ENCODE measurements at regions of chr2 and their contacts with region 1.

Region 1: GRCh38 chr2:58448065-58448507 is 207.0 kb upstream of the FANCL start:
- DNase-seq: peak; percentile 14 to 84 (median 71)
- H3K4me3 ChIP-seq: peak overlapping the region in 3 of 59 donors; percentile 4 to 31 (median 12)
- H3K27ac ChIP-seq: peak overlapping the region in 50 of 59 donors; percentile 5 to 81 (median 67)
- H3K27me3 ChIP-seq: no peaks in the 10 kb centered on the region
- CTCF ChIP-seq: peak; percentile 40 to 97 (median 74)

Region 2: GRCh38 chr2:57720728-57721627 is 727.1 kb before region 1 on chr2:
- intact Hi-C with region 1: loop called in 1 of 2 experiments (anchors 5 kb)
- DNase-seq: peak in 8 of 10 donors; percentile 3 to 55 (median 44)
- H3K4me3 ChIP-seq: peak overlapping the region in 36 of 59 donors; percentile 8 to 48 (median 29)
- H3K27ac ChIP-seq: peak overlapping the region in 1 of 59 donors; percentile 22
- H3K27me3 ChIP-seq: no peaks in the 10 kb centered on the region
- CTCF ChIP-seq: peak; percentile 60 to 91 (median 82)

Region 3: GRCh38 chr2:58131191-58132011 is 316.7 kb before region 1 on chr2:
- intact Hi-C with region 1: loop called (anchors 2 to 5 kb)
- DNase-seq: no peak
- H3K4me3 ChIP-seq: no peak overlapping the region
- H3K27ac ChIP-seq: peak overlapping the region in 52 of 59 donors; percentile 5 to 78 (median 57)
- H3K27me3 ChIP-seq: no peaks in the 10 kb centered on the region
- CTCF ChIP-seq: peak in 54 of 56 donors; percentile 30 to 81 (median 60)

Region 4: GRCh38 chr2:58283931-58284330 is 164.2 kb before region 1 on chr2:
- intact Hi-C with region 1: no loop called
- DNase-seq: no peak
- H3K4me3 ChIP-seq: no peak overlapping the region
- H3K27ac ChIP-seq: no peak overlapping the region
- H3K27me3 ChIP-seq: no peaks in the 10 kb centered on the region
- CTCF ChIP-seq: no peak

Region 5: GRCh38 chr2:58553937-58554336 is 105.9 kb after region 1 on chr2:
- intact Hi-C with region 1: loop called (anchors 5 to 10 kb)
- DNase-seq: peak in 3 of 10 donors; percentile 35 to 64 (median 50)
- H3K4me3 ChIP-seq: no peak overlapping the region
- H3K27ac ChIP-seq: no peak overlapping the region
- H3K27me3 ChIP-seq: peaks cover 0 to 1% (median 0%) of the 10 kb centered on the region in 45 donors
- CTCF ChIP-seq: peak in 52 of 56 donors; percentile 12 to 75 (median 48)

Measured in dorsolateral prefrontal cortex (tissue), 120 donors.